Ascending aorta (tissue), 2 donors: ENCODE measurements at regions of chr3 and their contacts with region 1.

Region 1: GRCh38 chr3:134650431-134651346 is at the start of gene KY:
- DNase-seq: peak in 1 of 2 donors; percentile 73
- H3K4me3 ChIP-seq: peak within 1 kb of the TSS; percentile 65 to 72
- H3K27ac ChIP-seq: peak within 1 kb of the TSS; percentile 59 to 76
- H3K4me1 ChIP-seq: peaks cover 4 to 16% of the 10 kb centered on the region in 2 donors
- H3K27me3 ChIP-seq: no peaks in the 10 kb centered on the region
- CTCF ChIP-seq: peak in 2 of 3 experiments; percentile 30 to 61
- total RNA-seq, gene KY: 0.43 TPM

Region 2: GRCh38 chr3:134677196-134677986 is 26.7 kb after region 1 on chr3:
- intact Hi-C with region 1: loop called (anchors 2 kb)
- DNase-seq: no peak
- H3K4me3 ChIP-seq: no peak overlapping the region
- H3K27ac ChIP-seq: no peak overlapping the region
- H3K4me1 ChIP-seq: no peaks in the 10 kb centered on the region
- H3K27me3 ChIP-seq: no peaks in the 10 kb centered on the region
- CTCF ChIP-seq: peak; percentile 38 to 65 (median 38)